ENCODE measurements at regions of chr3 and their contacts with region 1.

Region 1: GRCh38 chr3:47522082-47522987 is 8.8 kb upstream of the ELP6 start:
- DNase-seq: peak; percentile 41
- H3K4me3 ChIP-seq: no peak overlapping the region
- H3K27me3 ChIP-seq: no peaks in the 10 kb centered on the region
- CTCF ChIP-seq: peak; percentile 84

Region 2: GRCh38 chr3:47533481-47533880 is 11.1 kb after region 1 on chr3:
- CTCF ChIA-PET with region 1: interaction called, 37 read pairs
- POLR2A ChIA-PET with region 1: no interaction called
- DNase-seq: no peak
- H3K4me3 ChIP-seq: no peak overlapping the region
- H3K27me3 ChIP-seq: no peaks in the 10 kb centered on the region; the same call in 1 of the 2 replicates
- CTCF ChIP-seq: no peak

Region 3: DNA sequence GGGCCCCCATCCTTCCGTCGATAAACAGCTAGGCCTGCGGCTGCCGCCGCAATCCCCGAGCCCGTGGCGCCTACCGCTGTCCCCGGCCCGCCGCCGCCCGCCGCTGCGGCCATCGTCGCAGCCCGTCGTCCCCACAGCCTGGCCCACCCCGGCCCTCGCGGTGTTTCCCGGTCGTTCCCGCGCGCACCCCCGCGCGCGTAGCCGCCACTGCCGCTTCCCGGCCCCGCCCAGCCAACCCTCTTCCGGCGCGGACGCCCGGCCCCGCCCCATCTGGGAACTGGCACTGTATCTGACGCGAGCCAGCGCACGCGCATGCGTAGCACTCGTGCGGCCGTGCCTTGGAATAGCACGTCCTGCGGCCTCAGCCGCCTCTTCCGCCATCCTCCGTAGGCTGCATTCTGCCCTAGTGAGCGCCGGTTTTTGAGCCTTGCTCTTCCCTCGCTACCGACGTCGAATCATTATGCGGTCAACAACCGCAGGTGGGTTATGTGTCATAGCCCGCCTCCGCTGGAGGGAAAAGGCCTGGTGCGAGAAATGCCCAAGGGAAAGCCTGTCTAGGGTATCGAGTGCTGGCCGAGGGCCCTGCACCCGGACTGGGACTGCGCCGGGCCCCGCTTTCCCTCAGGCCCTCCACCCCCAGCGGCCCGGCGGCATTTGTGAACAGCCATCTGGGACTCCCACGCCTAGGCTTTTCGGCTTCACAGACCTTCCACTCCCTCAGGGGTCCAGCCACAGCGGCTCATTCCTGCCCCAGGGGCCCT is 259.5 kb after region 1 on chr3 and contains the start of gene SMARCC1:
- CTCF ChIA-PET with region 1: interaction called, 62 read pairs
- POLR2A ChIA-PET with region 1: interaction called, 3 read pairs
- DNase-seq: peak; percentile 82
- H3K4me3 ChIP-seq: peak within 1 kb of the TSS; percentile 83
- H3K27me3 ChIP-seq: no peaks in the 10 kb centered on the region
- CTCF ChIP-seq: 0 out of 2 replicates have a peak, but pooled peaks have one; percentile 3
- polyA plus RNA-seq, gene SMARCC1: 14.8 and 25.8 TPM in 2 replicates

Region 4: DNA sequence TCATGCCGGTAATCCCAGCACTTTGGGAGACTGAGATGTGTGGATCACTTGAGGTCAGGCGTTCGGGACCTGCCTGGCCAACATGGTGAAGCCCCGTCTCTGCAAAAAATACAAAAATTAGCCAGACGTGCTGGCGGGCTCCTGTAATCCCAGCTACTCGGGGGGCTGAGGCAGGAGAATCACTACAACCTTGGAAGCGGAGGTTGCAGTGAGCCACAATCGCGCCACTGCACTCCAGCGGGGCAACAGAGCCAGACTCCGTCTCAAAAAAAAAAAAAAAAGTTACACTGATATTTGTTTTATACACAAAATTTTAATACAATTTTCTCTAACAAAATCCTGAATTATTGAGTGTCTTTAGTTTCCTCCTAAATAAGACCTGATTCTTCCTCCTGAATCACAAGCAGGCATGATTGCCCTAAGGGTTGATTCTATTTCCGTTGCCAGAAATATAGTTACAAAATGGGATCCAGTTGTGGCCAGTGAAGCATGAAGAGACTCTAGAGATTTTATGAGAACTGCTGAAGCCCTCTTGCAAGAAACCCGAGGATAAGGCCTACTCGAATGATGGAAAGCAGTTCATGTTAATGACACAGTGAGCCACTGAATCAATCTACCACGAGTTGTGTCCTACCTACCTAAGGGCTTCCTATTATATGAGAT is 269.0 kb after region 1 on chr3:
- CTCF ChIA-PET with region 1: interaction called, 62 read pairs
- POLR2A ChIA-PET with region 1: no interaction called
- DNase-seq: no peak
- H3K4me3 ChIP-seq: no peak overlapping the region
- H3K27me3 ChIP-seq: no peaks in the 10 kb centered on the region
- CTCF ChIP-seq: no peak

Region 5: DNA sequence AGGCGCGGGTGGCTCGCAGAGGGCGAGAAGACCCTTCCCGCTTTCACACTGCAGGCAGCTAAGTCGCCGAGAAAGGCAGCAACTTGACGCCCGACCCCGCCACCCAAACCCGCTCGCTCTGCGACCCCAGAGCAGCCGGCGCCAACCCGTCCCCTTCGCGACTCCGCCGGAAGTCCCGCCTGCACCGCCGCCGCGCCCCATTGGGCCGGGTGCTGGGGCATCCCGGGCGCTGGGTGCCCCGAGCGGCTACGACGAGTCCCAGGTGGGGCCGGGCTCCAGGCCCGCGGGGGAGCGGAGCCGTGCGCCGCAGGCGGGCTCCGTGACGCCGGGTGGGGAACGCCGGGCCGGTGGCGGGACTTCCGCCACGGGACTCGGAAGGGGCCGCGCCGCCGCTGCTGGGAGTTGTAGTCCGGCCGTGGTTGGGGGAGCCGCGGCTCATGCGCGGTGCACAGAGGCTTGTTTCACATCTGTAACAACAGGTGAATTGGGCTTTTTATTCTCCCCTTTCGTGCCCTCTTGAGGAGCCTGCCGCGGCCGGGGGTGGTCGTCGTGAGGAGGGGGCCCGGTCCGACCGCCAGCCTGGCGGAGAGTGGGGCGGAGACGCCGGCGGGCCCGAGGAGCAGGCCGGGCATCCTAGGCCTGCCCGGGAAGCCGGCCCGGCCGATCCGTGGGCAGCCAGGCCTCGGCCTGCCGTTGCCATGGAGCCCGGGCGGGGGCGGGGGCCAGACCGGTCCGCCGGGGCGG is 280.6 kb after region 1 on chr3 and contains the start of gene DHX30:
- CTCF ChIA-PET with region 1: interaction called, 10 read pairs
- POLR2A ChIA-PET with region 1: no interaction called
- DNase-seq: no peak
- H3K4me3 ChIP-seq: peak within 1 kb of the TSS; percentile 63
- H3K27me3 ChIP-seq: no peaks in the 10 kb centered on the region
- CTCF ChIP-seq: no peak
- polyA plus RNA-seq, gene DHX30: 31.8 and 53.4 TPM in 2 replicates

Measured in BJ (cell line).